ENCODE measurements at regions of chr9 and their contacts with region 1.

Region 1: GRCh38 chr9:104386425-104387069 is 117.5 kb upstream of the OR13F1 start:
- DNase-seq: peak in 2 of 4 donors; percentile 3 to 31
- ATAC-seq: peak; percentile 86
- H3K4me3 ChIP-seq: no peak overlapping the region
- H3K27ac ChIP-seq: no peak overlapping the region
- H3K4me1 ChIP-seq: no peaks in the 10 kb centered on the region
- H3K27me3 ChIP-seq: no peaks in the 10 kb centered on the region
- CTCF ChIP-seq: peak in 1 of 2 donors; percentile 54

Region 2: GRCh38 chr9:104027295-104027694 is 359.3 kb before region 1 on chr9:
- intact Hi-C with region 1: loop called in 1 of 2 experiments (anchors 10 kb)
- DNase-seq: no peak
- ATAC-seq: no peak
- H3K4me3 ChIP-seq: no peak overlapping the region
- H3K27ac ChIP-seq: no peak overlapping the region
- H3K4me1 ChIP-seq: no peaks in the 10 kb centered on the region
- H3K27me3 ChIP-seq: no peaks in the 10 kb centered on the region
- CTCF ChIP-seq: no peak

Region 3: GRCh38 chr9:104279535-104280190 is 106.9 kb before region 1 on chr9:
- intact Hi-C with region 1: no loop called
- DNase-seq: peak in 1 of 4 donors; percentile 4
- ATAC-seq: no peak
- H3K4me3 ChIP-seq: no peak overlapping the region
- H3K27ac ChIP-seq: no peak overlapping the region
- H3K4me1 ChIP-seq: no peaks in the 10 kb centered on the region
- H3K27me3 ChIP-seq: no peaks in the 10 kb centered on the region
- CTCF ChIP-seq: no peak